CD8-positive, alpha-beta T cell (primary cell): ENCODE measurements at regions of chr6 and their contacts with region 1.

Region 1: GRCh38 chr6:20366091-20366832 is 35.4 kb upstream of the E2F3 start:
- DNase-seq: peak; percentile 17 to 89 (median 57)
- ATAC-seq: peak; percentile 77
- H3K4me3 ChIP-seq: peak overlapping the region in 1 of 2 experiments; percentile 10
- H3K4me3 Mint-ChIP-seq: peak overlapping the region; percentile 74
- H3K27ac ChIP-seq: peak overlapping the region; percentile 29 to 72
- H3K27ac Mint-ChIP-seq: peak overlapping the region; percentile 96
- H3K4me1 ChIP-seq: peaks cover 61% of the 10 kb centered on the region
- H3K4me1 Mint-ChIP-seq: peaks cover 65% of the 10 kb centered on the region
- H3K27me3 ChIP-seq: no peaks in the 10 kb centered on the region
- H3K27me3 Mint-ChIP-seq: no peaks in the 10 kb centered on the region
- CTCF ChIP-seq: no peak

Region 2: GRCh38 chr6:20319520-20320357 is 46.5 kb before region 1 on chr6:
- CTCF ChIA-PET with region 1: interaction called, 18 read pairs
- POLR2A ChIA-PET with region 1: interaction called, 129 read pairs
- intact Hi-C with region 1: loop called (anchors 1 to 5 kb)
- DNase-seq: peak; percentile 57 to 92 (median 76)
- ATAC-seq: peak; percentile 91
- H3K4me3 ChIP-seq: peak overlapping the region; percentile 46 to 61
- H3K4me3 Mint-ChIP-seq: peak overlapping the region; percentile 93
- H3K27ac ChIP-seq: peak overlapping the region; percentile 78 to 87
- H3K27ac Mint-ChIP-seq: peak overlapping the region; percentile 99
- H3K4me1 ChIP-seq: peaks cover 12% of the 10 kb centered on the region
- H3K4me1 Mint-ChIP-seq: peaks cover 21% of the 10 kb centered on the region
- H3K27me3 ChIP-seq: no peaks in the 10 kb centered on the region
- H3K27me3 Mint-ChIP-seq: no peaks in the 10 kb centered on the region
- CTCF ChIP-seq: no peak

Region 3: DNA sequence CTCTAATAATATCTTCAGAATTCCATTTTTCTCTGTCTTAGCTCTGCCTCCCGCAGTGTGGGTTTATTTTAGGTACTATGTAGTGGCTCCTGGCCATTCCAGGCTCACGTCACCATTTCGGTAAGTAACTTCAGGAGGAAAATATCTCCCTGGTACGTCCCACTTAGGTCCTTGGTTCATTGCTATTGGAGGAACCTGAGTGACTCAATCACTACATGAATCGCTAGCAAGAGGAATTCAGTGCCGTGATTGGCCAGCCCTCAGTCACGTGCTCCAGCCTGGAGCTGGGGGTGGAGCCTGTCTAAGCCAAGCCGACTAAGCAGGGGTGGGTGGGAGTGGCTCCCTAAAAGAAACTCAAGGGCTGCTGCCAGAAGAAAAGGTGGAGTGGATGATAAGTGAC is 31.9 kb before region 1 on chr6:
- CTCF ChIA-PET with region 1: interaction called, 11 read pairs
- POLR2A ChIA-PET with region 1: interaction called, 37 read pairs
- intact Hi-C with region 1: no loop called
- DNase-seq: no peak
- ATAC-seq: no peak
- H3K4me3 ChIP-seq: no peak overlapping the region
- H3K4me3 Mint-ChIP-seq: no peak overlapping the region
- H3K27ac ChIP-seq: no peak overlapping the region
- H3K27ac Mint-ChIP-seq: no peak overlapping the region
- H3K4me1 ChIP-seq: peaks cover 19% of the 10 kb centered on the region
- H3K4me1 Mint-ChIP-seq: peaks cover 24% of the 10 kb centered on the region
- H3K27me3 ChIP-seq: no peaks in the 10 kb centered on the region
- H3K27me3 Mint-ChIP-seq: no peaks in the 10 kb centered on the region
- CTCF ChIP-seq: no peak

Region 4: GRCh38 chr6:20341564-20341963 is 24.7 kb before region 1 on chr6:
- CTCF ChIA-PET with region 1: interaction called, 15 read pairs
- POLR2A ChIA-PET with region 1: interaction called, 37 read pairs
- intact Hi-C with region 1: no loop called
- DNase-seq: no peak
- ATAC-seq: no peak
- H3K4me3 ChIP-seq: no peak overlapping the region
- H3K4me3 Mint-ChIP-seq: no peak overlapping the region
- H3K27ac ChIP-seq: no peak overlapping the region
- H3K27ac Mint-ChIP-seq: no peak overlapping the region
- H3K4me1 ChIP-seq: peaks cover 4% of the 10 kb centered on the region
- H3K4me1 Mint-ChIP-seq: peaks cover 19% of the 10 kb centered on the region
- H3K27me3 ChIP-seq: no peaks in the 10 kb centered on the region
- H3K27me3 Mint-ChIP-seq: no peaks in the 10 kb centered on the region
- CTCF ChIP-seq: no peak

Region 5: GRCh38 chr6:20377623-20378265 is 11.5 kb after region 1 on chr6:
- CTCF ChIA-PET with region 1: interaction called, 24 read pairs
- POLR2A ChIA-PET with region 1: interaction called, 24 read pairs
- intact Hi-C with region 1: no loop called
- DNase-seq: no peak
- ATAC-seq: no peak
- H3K4me3 ChIP-seq: no peak overlapping the region
- H3K4me3 Mint-ChIP-seq: no peak overlapping the region
- H3K27ac ChIP-seq: no peak overlapping the region
- H3K27ac Mint-ChIP-seq: no peak overlapping the region
- H3K4me1 ChIP-seq: peaks cover 4% of the 10 kb centered on the region
- H3K4me1 Mint-ChIP-seq: peaks cover 23% of the 10 kb centered on the region
- H3K27me3 ChIP-seq: no peaks in the 10 kb centered on the region
- H3K27me3 Mint-ChIP-seq: no peaks in the 10 kb centered on the region
- CTCF ChIP-seq: no peak

Region 6: GRCh38 chr6:21064756-21065340 is 698.6 kb after region 1 on chr6:
- CTCF ChIA-PET with region 1: no interaction called
- POLR2A ChIA-PET with region 1: no interaction called
- intact Hi-C with region 1: no loop called
- DNase-seq: no peak
- ATAC-seq: no peak
- H3K4me3 ChIP-seq: no peak overlapping the region
- H3K4me3 Mint-ChIP-seq: no peak overlapping the region
- H3K27ac ChIP-seq: no peak overlapping the region
- H3K27ac Mint-ChIP-seq: no peak overlapping the region
- H3K4me1 ChIP-seq: no peaks in the 10 kb centered on the region
- H3K4me1 Mint-ChIP-seq: no peaks in the 10 kb centered on the region
- H3K27me3 ChIP-seq: no peaks in the 10 kb centered on the region
- H3K27me3 Mint-ChIP-seq: no peaks in the 10 kb centered on the region
- CTCF ChIP-seq: no peak